ENCODE measurements at regions of chr12 and their contacts with region 1.

Region 1: DNA sequence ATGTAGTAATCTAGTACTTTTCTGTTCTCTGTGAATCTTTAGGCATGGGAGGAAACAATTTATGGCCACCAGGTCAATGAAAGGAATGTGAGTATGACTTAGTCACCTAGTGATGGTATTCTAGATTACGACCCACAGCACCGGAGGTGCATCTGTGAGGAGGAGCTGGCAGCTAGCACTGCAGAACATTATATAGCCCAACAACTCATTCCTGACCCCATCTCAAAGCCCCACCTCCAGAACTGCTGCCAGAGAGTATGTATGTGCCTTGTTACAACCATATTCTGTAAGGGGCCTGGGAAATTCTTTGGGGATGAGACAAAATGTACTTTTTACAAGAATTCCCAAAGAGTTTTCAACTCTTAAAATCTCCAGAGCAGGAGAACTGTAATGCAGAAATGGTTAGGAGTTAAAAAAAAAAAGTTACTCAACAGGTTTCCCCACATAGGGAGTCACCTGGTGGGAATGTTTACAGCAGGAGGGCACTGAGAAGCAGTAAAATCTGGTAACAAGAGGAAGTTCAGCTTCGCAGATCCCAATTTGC is 34.9 kb upstream of the CERS5 start:
- DNase-seq: peak; percentile 83 to 89
- H3K4me3 ChIP-seq: no peak overlapping the region
- H3K4me3 Mint-ChIP-seq: peak overlapping the region; percentile 74
- H3K27ac Mint-ChIP-seq: peak overlapping the region; percentile 95
- H3K4me1 ChIP-seq: peaks cover 40% of the 10 kb centered on the region
- H3K4me1 Mint-ChIP-seq: peaks cover 34% of the 10 kb centered on the region
- H3K27me3 ChIP-seq: no peaks in the 10 kb centered on the region
- H3K27me3 Mint-ChIP-seq: no peaks in the 10 kb centered on the region
- CTCF ChIP-seq: peak in 1 of 2 experiments; percentile 14

Region 2: DNA sequence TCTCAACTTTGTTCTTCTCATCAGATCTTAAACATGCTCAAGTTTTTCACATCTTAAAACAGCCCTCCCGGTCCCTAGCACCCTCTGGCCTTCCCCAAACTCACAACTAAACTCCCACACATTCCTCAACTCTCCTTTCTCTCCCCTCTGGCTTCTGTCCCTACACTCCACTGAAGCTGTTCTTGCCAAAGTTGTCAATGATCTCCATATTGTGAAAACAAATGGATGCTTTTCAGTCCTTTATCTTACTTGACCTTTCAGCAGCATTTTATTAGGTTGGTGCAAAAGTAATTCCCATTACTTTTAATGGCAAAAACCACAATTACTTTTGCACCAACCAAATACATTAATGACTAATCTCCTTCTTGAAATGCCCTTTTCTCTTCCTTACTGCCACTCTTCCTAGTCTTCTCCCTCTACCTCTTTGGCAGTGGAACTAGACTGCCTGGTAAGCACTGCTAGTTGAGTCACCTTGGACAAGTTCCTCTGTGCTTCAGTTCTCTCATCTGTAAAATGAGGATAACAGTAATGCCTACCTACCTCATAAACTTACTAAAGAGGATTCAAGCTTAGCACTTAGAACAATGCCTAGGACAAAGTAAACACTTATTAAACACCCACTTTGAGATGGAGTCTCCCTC is 50.9 kb before region 1 on chr12:
- CTCF ChIA-PET with region 1: no interaction called
- POLR2A ChIA-PET with region 1: no interaction called
- intact Hi-C with region 1: no loop called
- DNase-seq: no peak
- H3K4me3 ChIP-seq: no peak overlapping the region
- H3K4me3 Mint-ChIP-seq: no peak overlapping the region
- H3K27ac Mint-ChIP-seq: no peak overlapping the region
- H3K4me1 ChIP-seq: peaks cover 2% of the 10 kb centered on the region
- H3K4me1 Mint-ChIP-seq: peaks cover under 1% of the 10 kb centered on the region
- H3K27me3 ChIP-seq: no peaks in the 10 kb centered on the region
- H3K27me3 Mint-ChIP-seq: no peaks in the 10 kb centered on the region
- CTCF ChIP-seq: no peak

Region 3: GRCh38 chr12:50224026-50224692 is 22.1 kb after region 1 on chr12:
- CTCF ChIA-PET with region 1: interaction called, 5 read pairs
- POLR2A ChIA-PET with region 1: no interaction called
- intact Hi-C with region 1: loop called (anchors 1 kb)
- DNase-seq: no peak
- H3K4me3 ChIP-seq: no peak overlapping the region
- H3K4me3 Mint-ChIP-seq: no peak overlapping the region
- H3K27ac Mint-ChIP-seq: no peak overlapping the region
- H3K4me1 ChIP-seq: peaks cover 26% of the 10 kb centered on the region; the same call in 1 of the 2 replicates
- H3K4me1 Mint-ChIP-seq: no peaks in the 10 kb centered on the region
- H3K27me3 ChIP-seq: no peaks in the 10 kb centered on the region
- H3K27me3 Mint-ChIP-seq: no peaks in the 10 kb centered on the region
- CTCF ChIP-seq: no peak

Region 4: GRCh38 chr12:50275556-50275955 is 73.5 kb after region 1 on chr12:
- CTCF ChIA-PET with region 1: no interaction called
- POLR2A ChIA-PET with region 1: no interaction called
- intact Hi-C with region 1: no loop called
- DNase-seq: no peak
- H3K4me3 ChIP-seq: no peak overlapping the region
- H3K4me3 Mint-ChIP-seq: no peak overlapping the region
- H3K27ac Mint-ChIP-seq: peak overlapping the region; percentile 59
- H3K4me1 ChIP-seq: peaks cover 58% of the 10 kb centered on the region
- H3K4me1 Mint-ChIP-seq: peaks cover 42% of the 10 kb centered on the region
- H3K27me3 ChIP-seq: no peaks in the 10 kb centered on the region
- H3K27me3 Mint-ChIP-seq: no peaks in the 10 kb centered on the region
- CTCF ChIP-seq: no peak

Region 5: GRCh38 chr12:50302686-50303085 is 100.6 kb after region 1 on chr12:
- CTCF ChIA-PET with region 1: no interaction called
- POLR2A ChIA-PET with region 1: no interaction called
- intact Hi-C with region 1: loop called (anchors 1 kb)
- DNase-seq: no peak
- H3K4me3 ChIP-seq: no peak overlapping the region
- H3K4me3 Mint-ChIP-seq: no peak overlapping the region
- H3K27ac Mint-ChIP-seq: no peak overlapping the region
- H3K4me1 ChIP-seq: peaks cover 27% of the 10 kb centered on the region
- H3K4me1 Mint-ChIP-seq: peaks cover 10% of the 10 kb centered on the region
- H3K27me3 ChIP-seq: no peaks in the 10 kb centered on the region
- H3K27me3 Mint-ChIP-seq: no peaks in the 10 kb centered on the region
- CTCF ChIP-seq: no peak

Region 6: DNA sequence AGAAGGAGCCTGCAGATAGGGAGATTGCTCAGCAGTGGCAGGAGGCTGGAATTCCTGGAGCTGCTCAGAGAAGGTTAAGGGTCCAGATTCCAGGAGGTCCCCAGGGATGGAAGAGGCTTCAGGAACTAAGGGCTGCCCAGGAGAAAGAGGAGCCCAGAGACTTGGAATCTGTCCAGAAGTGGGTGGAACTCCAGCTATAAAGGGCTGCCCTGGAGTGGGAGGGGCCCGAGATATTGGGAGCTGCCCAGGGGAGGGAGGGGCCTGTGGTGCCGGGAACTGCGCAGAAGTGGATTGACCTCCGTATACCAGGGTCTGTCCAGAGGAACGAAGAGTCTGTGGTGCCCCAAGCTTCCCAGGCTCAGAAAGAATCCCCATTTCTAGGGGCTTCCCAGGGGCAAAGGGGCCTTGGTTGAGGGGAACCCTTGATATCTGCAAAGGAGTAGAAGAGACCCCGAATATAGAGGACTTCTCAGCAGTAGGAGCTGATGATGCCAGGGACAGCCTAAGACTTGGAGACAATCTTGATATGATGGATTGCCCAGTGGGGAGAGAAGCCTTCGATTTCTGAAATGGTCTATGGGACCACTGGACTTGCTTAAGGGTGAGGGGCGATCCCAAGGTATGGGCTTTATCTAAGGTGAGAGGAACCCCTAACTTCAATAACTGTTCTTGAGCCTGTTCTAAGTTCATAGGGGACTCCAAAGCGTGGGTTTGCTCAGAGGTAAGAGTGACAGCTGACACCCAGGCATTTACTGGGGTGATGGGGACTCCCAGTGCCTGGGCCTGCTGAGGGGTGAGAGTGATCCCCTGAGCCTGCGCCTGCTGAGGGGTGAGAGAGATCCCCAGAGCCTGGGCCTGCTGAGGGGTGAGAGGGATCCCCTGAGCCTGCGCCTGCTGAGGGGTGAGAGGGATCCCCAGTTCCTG is 149.3 kb after region 1 on chr12:
- CTCF ChIA-PET with region 1: no interaction called
- POLR2A ChIA-PET with region 1: no interaction called
- intact Hi-C with region 1: no loop called
- DNase-seq: no peak
- H3K4me3 ChIP-seq: no peak overlapping the region
- H3K4me3 Mint-ChIP-seq: no peak overlapping the region
- H3K27ac Mint-ChIP-seq: no peak overlapping the region
- H3K4me1 ChIP-seq: 0 out of 2 replicates have a peak, but pooled peaks cover 5% of the 10 kb centered on the region
- H3K4me1 Mint-ChIP-seq: no peaks in the 10 kb centered on the region
- H3K27me3 ChIP-seq: no peaks in the 10 kb centered on the region
- H3K27me3 Mint-ChIP-seq: no peaks in the 10 kb centered on the region
- CTCF ChIP-seq: no peak

Region 7: DNA sequence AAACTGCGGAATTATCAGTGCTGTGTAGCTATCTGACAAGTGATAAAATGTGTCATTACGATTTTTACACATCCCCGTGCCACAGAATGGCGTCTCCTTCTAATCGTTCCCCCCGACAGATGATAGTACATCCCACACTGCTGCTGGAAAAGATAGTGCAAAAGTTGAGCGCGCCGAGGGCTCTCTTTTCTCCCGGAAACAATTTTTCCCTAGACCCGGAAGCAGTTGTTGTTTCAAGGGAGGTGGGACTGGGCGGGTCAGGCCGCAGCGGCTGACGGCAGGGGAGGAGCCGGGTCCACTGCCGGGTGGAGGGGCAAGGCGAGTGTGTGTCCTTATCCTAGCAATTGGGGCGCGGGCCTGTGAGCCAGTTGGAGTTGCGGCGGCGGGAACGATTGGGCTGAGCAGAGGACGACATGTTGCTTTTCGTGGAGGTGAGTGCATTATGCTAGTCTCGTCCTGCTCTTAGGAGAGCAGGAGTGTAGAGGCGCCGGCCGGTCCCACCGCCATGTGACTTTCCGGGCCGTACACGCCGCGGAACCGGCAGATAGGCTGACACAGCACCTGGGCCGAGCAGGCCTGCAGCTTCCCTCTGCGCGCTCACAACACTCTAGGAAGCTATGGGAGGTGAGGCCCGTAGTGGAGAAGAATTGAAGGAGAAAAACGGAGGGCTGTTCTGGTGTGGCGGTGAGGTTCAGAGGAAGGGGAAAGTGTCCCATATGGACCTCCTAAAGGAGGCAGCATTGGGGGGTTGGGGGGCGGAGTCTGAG is 198.7 kb after region 1 on chr12 and contains the start of gene LARP4:
- CTCF ChIA-PET with region 1: no interaction called
- POLR2A ChIA-PET with region 1: no interaction called
- intact Hi-C with region 1: loop called (anchors 5 kb)
- DNase-seq: peak; percentile 98
- H3K4me3 ChIP-seq: peak within 1 kb of the TSS; percentile 83
- H3K4me3 Mint-ChIP-seq: peak within 1 kb of the TSS; percentile 99
- H3K27ac Mint-ChIP-seq: peak within 1 kb of the TSS; percentile 100
- H3K4me1 ChIP-seq: peaks cover 36% of the 10 kb centered on the region
- H3K4me1 Mint-ChIP-seq: peaks cover 34% of the 10 kb centered on the region
- H3K27me3 ChIP-seq: no peaks in the 10 kb centered on the region
- H3K27me3 Mint-ChIP-seq: no peaks in the 10 kb centered on the region
- CTCF ChIP-seq: no peak
- total RNA-seq, gene LARP4: 103 and 115 TPM in 2 replicates